A549 (cell line): ENCODE measurements at regions of chr16 and their contacts with region 1.

Region 1: DNA sequence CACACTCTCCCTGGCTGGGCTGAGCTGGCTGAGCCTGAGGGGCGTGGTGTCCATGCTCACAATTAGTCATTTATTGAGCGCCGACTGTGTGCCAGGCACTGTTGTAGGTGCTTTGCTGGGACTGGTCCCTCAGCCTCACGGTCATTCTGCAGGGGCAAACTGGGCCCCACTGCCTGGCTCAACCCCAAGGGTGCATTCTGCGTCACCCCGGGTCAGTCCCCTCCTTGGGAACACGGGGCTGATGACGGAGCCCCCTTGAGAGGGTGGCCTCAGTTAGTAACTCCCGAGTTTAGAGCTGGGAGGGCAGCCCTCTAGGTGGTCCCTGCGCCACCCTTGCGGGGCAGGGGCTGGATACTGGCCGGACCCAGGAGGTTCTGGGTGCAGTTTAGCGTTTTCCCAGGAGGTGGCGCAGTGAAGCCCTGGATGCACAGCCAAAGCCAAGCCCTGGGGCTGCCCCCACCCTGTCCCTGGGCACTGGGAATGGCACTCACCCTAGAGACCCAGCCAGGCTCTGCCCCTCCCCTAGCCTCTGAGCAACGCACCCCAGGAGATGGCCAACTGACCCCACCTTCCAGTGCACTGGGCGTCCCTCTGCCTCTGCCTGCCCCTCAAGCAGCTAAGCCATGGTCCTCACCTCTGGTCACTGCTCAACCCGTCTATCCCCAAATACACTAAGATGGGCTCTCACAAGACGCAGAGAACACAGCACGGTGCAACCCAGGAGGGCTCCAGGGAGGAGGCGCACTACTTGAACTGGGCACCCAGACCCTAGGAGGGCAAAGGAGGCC is 243.2 kb upstream of the GSE1 start:
- DNase-seq: peak; percentile 33 to 79
- ATAC-seq: peak; percentile 68 to 92; a peak in 5 of 6 replicates
- H3K4me3 ChIP-seq: no peak overlapping the region
- H3K27ac ChIP-seq: peak overlapping the region in 1 of 2 experiments; percentile 57; a peak in 2 of 6 replicates
- H3K4me1 ChIP-seq: peaks cover 17% of the 10 kb centered on the region
- CTCF ChIP-seq: peak; percentile 70
- EP300 ChIP-seq: no peak
- POLR2A ChIP-seq: no peak
- RAD21 ChIP-seq: peak; percentile 64 to 70

Region 2: DNA sequence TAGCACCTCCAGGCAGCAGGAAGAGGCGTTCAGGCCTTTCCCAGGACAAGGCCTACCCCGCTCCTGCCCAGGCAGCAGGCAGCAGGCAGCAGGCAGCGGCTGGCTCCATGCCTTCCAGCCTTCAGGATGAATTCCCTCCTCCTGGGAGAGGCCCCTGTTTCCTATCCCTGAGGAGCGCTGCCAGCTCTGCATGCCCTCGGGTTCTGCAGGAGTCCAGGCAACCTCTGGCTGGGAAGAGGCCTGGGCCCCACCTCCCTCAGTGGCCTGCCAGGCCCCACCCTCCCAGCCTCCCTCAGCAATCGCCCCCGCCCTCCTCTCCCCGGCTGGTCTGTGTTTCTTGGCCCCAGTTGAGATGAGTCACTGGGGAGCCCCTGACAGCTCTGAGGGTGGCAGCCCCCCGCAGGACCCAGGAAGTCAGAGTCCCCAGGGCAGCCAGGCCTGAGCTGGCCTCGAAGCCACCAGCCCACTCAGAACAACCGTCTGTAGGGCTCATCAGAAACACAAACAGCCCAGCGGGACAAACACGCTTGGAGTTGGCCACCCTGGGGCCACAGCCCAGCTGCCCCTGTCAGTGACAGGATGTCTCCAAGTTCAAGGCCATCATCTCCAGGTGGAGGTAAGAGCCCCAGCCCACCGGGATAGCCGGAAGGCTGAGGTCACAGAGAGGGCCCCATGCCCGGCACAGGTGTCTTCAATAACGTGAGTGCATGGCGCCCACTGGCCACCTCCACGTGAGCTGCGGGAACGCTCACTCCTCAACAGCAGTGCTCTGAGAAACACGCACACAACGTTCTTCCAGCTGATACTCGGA is 218.1 kb before region 1 on chr16:
- CTCF ChIA-PET with region 1: no interaction called
- POLR2A ChIA-PET with region 1: no interaction called
- DNase-seq: no peak
- ATAC-seq: peak; percentile 61 to 79; a peak in 5 of 6 replicates
- H3K4me3 ChIP-seq: no peak overlapping the region
- H3K27ac ChIP-seq: peak overlapping the region; percentile 27 to 81; a peak in 4 of 6 replicates
- H3K4me1 ChIP-seq: peaks cover 18% of the 10 kb centered on the region
- CTCF ChIP-seq: no peak
- EP300 ChIP-seq: no peak
- POLR2A ChIP-seq: no peak
- RAD21 ChIP-seq: no peak

Region 3: DNA sequence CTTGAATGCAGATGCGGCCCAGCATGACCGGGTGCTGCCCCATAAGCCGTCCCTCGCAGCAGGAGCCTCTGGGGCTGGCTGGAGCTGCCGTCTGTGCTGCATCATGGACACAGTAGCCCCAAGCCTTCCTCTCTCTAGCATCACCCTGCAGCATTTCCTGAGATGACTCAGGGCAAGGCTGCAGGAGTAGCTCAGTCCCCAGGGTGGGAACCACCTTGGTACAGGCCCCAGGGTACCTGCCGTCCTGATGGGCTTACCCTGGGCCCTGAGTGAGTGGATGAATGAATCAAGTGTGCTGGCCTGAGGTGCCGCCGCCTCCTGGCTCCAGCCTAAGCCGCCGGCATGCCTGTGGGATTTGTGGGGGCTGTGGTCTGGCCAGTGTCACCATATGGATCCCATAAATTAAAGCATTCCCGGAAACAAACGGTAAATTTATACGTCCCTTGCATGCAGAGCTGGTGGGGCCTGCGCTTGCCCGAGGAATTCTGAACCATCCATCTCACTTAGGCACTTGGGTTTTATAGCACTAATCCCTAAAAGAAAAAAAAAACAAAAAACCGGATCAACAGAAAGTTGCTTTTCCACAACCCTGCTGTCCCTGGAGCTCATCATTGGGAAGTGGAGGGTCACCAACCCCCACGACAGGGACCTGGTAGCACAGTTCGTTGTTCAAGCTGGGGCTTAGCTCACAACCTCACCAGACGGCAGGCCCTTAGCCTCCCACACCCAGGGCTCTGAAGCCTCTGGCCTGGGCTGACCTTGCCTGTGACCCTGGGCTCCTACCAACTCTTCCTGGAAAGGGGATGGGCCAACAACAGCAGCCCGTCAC is 15.0 kb before region 1 on chr16:
- CTCF ChIA-PET with region 1: interaction called, 38 read pairs
- POLR2A ChIA-PET with region 1: no interaction called
- DNase-seq: no peak
- ATAC-seq: no peak
- H3K4me3 ChIP-seq: no peak overlapping the region
- H3K27ac ChIP-seq: no peak overlapping the region
- H3K4me1 ChIP-seq: peaks cover 18% of the 10 kb centered on the region
- CTCF ChIP-seq: no peak
- EP300 ChIP-seq: no peak
- POLR2A ChIP-seq: no peak
- RAD21 ChIP-seq: no peak

Region 4: DNA sequence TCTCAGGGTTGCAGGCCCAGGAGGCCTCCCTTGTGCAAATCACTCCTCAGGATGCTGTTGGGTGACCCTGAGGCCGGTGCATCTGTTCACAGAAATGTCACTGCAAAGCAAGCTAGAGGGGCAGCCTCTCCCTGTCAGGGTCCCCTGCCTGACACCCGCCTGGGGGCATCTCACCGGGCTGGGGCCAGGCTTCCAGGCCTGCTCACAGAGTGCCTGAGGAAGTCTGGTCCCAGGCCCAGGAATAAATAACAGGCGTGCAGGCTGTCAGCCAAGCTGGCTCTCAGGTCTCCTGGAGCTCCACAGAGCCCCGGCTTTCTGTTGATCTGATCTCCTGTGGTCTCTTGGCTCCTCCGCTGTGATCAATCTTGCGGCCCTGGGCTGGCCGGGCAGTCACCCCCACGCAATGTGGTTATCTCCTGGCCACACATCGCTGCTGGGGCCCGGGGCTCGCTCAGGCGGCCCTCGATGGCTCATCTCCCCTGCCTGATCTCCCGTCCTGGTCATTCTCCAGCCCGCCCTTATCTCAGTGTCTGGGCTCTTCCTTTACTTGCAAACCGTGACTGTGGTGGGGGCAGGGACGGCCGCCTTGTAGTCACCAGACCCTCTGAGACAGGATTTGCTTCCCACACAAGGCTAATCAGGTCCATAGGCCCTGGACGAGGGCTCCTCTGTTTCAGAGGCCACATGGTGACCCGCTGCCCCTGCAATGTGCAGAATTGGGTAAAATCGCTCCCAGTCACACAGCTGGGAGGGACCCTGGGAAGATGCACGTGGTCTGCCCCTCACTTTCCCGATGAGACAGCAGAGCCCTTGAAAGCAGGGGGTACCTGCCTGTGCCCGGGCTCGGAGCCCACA is 12.0 kb after region 1 on chr16:
- CTCF ChIA-PET with region 1: interaction called, 39 read pairs
- POLR2A ChIA-PET with region 1: no interaction called
- DNase-seq: no peak
- ATAC-seq: no peak
- H3K4me3 ChIP-seq: no peak overlapping the region
- H3K27ac ChIP-seq: no peak overlapping the region
- H3K4me1 ChIP-seq: no peaks in the 10 kb centered on the region
- CTCF ChIP-seq: no peak
- EP300 ChIP-seq: no peak
- POLR2A ChIP-seq: no peak
- RAD21 ChIP-seq: no peak

Region 5: DNA sequence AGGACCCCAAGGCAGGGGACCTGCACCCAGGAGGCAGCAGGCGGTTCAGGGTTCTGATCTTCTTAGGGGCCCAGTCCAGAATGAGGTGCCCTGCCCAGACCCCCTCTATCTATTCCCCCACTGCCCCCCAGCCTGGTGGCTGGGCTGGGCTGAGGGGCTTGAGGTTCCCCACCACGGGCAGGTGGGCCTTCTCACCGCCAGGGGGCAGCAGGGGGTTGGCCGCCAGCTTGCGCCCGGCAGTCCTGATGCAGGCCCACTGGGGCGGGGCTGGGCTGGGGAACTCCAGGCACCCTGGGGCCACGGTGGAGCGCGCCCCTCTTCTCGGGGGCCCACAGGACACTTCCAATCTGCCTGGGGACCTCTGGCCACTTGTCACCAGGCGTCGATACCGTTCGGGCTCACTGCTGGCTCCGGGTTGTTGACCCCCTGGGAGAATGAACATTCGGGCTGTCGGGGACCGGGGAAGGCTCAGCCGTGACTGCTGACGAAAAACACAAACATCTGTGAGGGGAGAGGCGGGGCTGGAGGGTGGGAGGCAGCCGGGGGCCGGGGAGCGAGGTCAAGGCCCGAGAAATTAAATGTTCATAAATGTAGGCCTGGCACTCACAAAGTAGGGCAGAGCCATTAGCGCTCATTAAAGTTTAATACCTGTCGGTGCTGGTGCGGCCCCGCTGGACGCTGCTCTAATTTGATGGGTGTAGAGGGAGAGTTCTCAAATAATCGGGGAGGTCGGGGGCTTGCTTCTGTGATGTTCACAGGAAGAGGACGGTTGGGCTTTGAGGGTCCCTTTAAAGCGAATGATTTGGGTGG is 23.9 kb after region 1 on chr16:
- CTCF ChIA-PET with region 1: interaction called, 95 read pairs
- POLR2A ChIA-PET with region 1: no interaction called
- DNase-seq: peak; percentile 65 to 84
- ATAC-seq: peak; percentile 40 to 69; a peak in 3 of 6 replicates
- H3K4me3 ChIP-seq: no peak overlapping the region
- H3K27ac ChIP-seq: peak overlapping the region in 1 of 2 experiments; percentile 86; a peak in 4 of 6 replicates
- H3K4me1 ChIP-seq: peaks cover 67% of the 10 kb centered on the region
- CTCF ChIP-seq: peak; percentile 84
- EP300 ChIP-seq: no peak
- POLR2A ChIP-seq: no peak
- RAD21 ChIP-seq: peak; percentile 58 to 69

Region 6: GRCh38 chr16:85428168-85428898 is 58.4 kb after region 1 on chr16:
- CTCF ChIA-PET with region 1: interaction called, 11 read pairs
- POLR2A ChIA-PET with region 1: no interaction called
- DNase-seq: peak; percentile 55 to 68
- ATAC-seq: peak; percentile 57 to 83; a peak in 5 of 6 replicates
- H3K4me3 ChIP-seq: no peak overlapping the region
- H3K27ac ChIP-seq: no peak overlapping the region
- H3K4me1 ChIP-seq: peaks cover 2% of the 10 kb centered on the region; the same call in 2 of the 3 replicates
- CTCF ChIP-seq: peak; percentile 67
- EP300 ChIP-seq: no peak
- POLR2A ChIP-seq: no peak
- RAD21 ChIP-seq: peak; percentile 53

Region 7: DNA sequence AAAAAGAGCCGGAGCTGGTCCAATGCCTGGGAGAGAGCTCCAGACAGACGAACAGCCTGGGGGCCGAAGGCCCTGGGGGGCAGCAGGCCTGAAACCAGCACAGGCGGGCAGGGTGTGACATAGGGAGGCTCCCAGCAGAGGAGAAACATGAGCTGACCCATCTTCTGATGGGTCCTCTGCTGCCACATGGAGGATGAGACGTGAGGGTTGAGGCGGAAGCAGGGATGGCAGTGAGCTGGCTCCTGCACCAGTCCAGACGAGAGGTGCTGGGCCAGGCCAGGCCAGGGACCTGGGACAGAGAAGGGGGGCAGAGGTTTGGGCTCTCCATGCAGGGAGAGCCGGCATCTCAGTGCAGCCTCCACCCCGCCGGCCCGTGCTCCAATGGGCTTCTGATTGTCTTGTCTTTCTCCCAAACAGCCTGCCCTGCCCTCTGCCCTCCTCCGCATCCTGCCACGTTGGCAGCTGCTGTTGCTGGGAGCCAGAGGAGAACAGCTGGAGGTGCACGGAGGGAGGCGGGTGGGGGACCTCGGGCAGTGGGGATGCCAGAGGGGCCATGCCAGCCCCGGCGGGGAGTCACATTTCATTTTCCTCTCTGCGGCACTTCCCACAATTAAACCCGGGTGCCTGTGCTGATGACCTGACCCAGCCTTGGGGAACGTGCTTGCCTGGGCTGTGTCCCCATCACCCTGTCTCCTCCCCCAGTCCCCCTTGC is 104.1 kb after region 1 on chr16:
- CTCF ChIA-PET with region 1: interaction called, 10 read pairs
- POLR2A ChIA-PET with region 1: no interaction called
- DNase-seq: no peak
- ATAC-seq: peak; percentile 57 to 75
- H3K4me3 ChIP-seq: no peak overlapping the region
- H3K27ac ChIP-seq: no peak overlapping the region
- H3K4me1 ChIP-seq: no peaks in the 10 kb centered on the region
- CTCF ChIP-seq: no peak
- EP300 ChIP-seq: no peak
- POLR2A ChIP-seq: no peak
- RAD21 ChIP-seq: no peak

Region 8: GRCh38 chr16:85541980-85542900 is 172.3 kb after region 1 on chr16:
- CTCF ChIA-PET with region 1: no interaction called
- POLR2A ChIA-PET with region 1: no interaction called
- DNase-seq: no peak
- ATAC-seq: peak in 1 of 2 experiments; percentile 18; a peak in 2 of 6 replicates
- H3K4me3 ChIP-seq: no peak overlapping the region
- H3K27ac ChIP-seq: no peak overlapping the region
- H3K4me1 ChIP-seq: no peaks in the 10 kb centered on the region
- CTCF ChIP-seq: no peak
- EP300 ChIP-seq: no peak
- POLR2A ChIP-seq: no peak
- RAD21 ChIP-seq: no peak

Region 9: DNA sequence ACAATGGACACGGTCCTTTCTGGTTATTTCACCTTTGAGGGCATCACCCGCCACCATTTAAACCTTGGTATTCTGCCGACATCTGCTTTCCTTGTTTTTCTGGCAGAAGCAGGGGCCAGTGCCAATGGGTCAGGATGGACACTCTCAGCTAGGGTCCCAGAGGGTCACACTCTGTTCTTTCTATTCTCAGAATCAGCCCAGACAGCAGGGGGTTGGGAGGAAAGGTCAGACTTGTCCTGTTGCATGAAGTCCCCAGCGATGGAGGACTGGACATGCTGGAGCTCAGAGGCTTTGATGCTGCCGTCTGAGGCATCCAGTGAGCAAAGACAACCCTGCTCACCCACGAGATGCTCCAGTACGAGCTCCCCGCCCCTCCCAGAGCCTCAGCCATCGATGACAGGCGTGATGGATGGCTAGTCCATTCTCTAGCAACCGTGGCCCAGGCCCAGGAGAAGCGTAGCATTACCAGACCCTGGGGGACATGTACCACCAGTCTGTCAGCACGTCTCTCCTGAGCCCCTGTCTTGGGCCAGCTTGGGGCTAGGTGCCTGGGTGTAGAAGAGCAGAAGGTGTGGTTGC is 1270.4 kb after region 1 on chr16:
- CTCF ChIA-PET with region 1: no interaction called
- POLR2A ChIA-PET with region 1: no interaction called
- DNase-seq: no peak
- ATAC-seq: no peak; a peak in 1 of 6 replicates
- H3K4me3 ChIP-seq: no peak overlapping the region
- H3K27ac ChIP-seq: no peak overlapping the region
- H3K4me1 ChIP-seq: no peaks in the 10 kb centered on the region
- CTCF ChIP-seq: no peak
- EP300 ChIP-seq: no peak
- POLR2A ChIP-seq: no peak
- RAD21 ChIP-seq: no peak